Head of caudate nucleus (tissue), 42 donors: ENCODE measurements at regions of chr12 and their contacts with region 1.

Region 1: DNA sequence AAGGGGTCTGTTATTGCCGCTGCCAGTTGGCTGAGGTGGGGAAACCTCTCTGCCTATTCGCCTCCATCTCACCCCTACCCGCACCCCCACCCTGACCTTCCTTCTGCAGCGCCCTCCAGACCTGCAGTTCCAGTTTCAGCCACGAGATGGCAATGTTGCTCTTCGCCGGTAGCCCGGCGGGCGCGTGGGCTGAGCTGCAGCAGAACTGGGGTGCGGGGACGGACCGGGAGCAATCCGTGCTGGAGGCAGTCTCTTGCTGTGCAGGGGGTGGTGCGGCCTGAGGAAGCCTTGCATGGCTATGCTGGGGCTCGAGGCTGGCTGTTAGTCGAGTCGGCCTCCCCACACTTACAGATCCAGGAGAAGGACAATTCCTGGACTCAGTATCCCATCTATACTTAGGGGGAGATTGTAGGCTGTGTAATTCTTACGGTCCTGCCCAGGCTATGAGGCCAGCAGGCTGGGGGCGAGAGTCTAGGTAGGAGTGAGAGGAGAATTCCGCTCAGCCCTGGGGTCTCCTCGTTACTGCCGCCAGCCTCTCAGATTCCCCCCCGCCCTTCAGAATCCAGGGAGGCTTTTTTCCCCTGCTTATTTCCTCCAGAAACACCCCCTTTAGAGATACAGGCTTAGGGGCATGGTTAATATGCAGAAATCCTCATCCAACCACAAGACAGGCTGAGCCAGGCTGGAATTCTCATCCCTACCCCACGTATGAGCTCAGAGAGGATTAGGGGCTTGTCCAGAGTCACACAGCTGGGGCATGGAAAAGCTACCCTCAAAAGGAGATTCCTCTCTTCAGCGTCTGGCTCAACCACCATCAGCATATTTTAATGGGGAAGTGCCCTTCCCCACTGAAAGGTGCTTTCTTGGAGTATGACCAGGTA is 118.2 kb downstream of the AACS start:
- DNase-seq: peak; percentile 77 to 96 (median 92)

Region 2: GRCh38 chr12:124906606-124907261 is 276.7 kb before region 1 on chr12:
- intact Hi-C with region 1: no loop called
- DNase-seq: peak; percentile 56 to 98 (median 90)

Region 3: DNA sequence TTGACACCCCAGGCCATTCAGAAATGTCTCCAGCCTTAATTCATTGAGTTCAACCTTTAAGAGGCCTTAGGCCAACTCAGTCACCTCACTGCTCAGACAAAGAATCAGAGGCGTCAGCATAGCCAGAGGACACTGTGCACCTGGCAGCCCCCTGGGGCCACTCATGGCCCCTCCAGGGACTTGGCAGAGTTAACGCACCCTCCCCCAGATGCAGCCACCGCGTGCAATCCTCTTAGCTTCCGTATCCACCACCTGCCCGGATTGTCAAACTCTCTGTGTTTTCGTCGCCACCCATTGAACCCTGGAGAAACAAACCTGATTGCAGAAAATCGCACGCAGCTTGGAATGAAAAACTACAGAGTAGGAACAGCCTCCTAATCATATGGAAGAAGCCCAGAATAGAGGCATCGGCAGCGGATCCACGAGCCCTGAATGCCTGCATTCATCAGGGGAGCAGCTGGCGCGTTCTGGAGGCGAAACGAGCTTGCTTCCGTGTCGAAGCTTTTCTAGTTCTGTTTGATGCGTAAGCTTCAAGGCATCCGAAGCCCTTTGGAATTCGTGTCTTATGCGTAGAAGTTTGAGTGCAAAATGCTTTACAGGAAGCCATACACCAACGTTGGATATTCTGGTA is 167.6 kb before region 1 on chr12:
- intact Hi-C with region 1: no loop called
- DNase-seq: peak in 41 of 42 donors; percentile 22 to 80 (median 57)

Region 4: DNA sequence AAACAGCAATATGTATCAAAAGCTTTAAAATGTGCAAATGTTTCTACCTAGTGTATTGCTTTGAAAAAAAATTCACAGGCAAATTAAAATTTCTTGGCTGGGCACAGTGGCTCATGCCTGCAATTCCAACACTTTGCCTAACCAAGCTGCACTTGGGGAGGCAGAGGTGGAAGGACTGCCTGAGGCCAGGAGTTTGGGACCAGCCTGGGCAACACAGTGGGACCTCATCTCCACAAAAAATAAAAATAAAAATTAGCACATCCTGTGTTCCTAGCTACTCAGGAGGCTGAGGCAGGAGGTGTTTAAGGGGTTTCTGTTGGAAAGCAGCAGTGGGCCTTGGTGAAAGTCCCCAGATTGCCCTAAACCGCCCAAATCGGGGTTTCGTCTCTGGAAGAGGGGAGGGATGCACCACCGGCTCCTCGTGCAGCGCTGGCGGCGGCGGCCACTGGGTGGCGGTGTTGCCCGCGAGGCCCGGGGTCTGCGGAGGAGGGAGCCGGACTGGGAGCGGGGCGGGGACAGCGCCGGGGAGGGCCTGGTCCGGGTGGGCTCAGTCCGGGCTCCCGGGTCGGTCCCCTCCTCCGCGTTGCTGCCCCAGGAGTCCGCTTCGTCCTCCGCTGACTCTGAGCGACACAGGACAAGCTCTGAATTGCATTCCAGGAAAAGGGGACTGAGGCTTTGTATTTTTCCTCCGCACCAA is 147.4 kb after region 1 on chr12:
- intact Hi-C with region 1: loop called (anchors 10 kb)
- DNase-seq: peak; percentile 67 to 95 (median 88)

Region 5: DNA sequence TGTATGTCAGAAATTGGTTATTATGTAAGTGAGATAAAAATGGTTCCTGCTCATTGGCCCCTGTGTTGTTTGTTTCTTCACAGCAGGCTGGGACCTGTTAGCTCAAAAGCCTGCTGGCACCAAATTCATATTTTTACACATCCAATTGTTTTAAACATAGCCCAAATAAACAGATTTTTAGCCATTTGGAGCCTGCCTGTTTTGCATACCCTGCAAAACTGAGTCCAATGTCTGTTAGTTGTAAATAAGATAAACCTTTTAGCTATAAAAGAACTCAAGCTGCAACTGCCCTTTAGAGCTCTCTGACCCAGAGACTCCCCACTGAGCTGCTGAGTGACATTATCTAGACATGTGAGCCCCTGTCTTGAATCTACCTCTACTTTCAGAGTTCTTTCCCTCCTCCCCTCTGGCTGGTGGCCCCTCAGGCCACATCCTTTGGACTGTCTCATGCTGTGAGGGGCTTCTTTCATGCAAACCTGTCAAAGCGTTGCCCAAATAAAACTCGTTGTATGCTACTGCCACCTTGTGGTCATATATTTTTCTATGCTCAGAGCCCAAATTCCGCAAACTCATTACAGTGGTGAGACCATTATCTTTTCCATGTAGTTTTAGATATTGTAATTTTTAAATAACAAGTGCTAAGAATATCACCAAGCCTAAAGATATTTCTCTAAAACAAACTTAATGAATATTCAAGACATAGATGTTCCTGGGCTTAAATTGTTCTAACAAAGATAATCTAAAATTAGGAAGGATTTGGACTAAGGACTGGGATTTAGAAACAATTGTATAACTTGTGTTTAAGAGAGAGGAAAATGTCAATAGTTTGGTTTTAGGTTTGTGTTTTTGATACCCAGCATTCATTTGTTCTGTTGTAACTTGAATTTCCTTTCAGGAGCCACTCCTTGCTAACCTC is 219.7 kb after region 1 on chr12:
- intact Hi-C with region 1: loop called (anchors 10 kb)
- DNase-seq: peak in 2 of 42 donors; percentile 12 to 51

Region 6: GRCh38 chr12:125604976-125605375 is 421.5 kb after region 1 on chr12:
- intact Hi-C with region 1: no loop called
- DNase-seq: no peak